Panc1 (cell line): ENCODE measurements at regions of chr7 and their contacts with region 1.

Region 1: DNA sequence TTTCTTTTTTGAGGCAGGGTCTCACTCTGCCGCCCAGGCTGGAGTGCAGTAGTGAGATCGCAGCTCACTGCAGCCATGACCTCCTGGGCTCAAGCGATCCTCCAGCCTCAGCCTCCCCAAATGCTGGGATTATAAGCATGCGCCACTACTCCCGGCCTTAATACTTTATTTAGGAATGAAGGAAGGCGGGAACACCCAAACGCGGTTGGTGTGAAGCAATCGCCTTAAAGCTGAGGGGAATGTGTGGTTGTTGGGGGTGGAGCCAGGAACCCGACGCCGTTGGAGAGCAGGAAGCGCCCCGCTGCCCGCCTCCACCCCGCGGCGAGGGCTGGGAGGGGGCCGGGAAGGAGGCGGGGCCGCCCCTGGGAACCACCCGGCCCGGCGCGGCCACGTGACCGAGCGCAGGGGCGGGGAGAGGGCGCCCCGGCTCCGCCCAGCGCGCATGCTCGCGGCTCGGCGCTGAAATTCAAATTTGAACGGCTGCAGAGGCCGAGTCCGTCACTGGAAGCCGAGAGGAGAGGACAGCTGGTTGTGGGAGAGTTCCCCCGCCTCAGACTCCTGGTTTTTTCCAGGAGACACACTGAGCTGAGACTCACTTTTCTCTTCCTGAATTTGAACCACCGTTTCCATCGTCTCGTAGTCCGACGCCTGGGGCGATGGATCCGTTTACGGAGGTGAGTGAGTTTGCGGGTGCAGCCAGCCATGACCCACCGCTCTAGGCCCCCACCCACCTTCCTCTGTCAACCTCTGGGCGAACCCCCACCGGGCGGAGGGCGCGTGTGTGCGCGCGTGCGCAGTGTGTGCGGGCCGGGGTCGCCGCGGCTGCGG is at the start of gene ANLN:
- DNase-seq: peak; percentile 91
- ATAC-seq: peak; percentile 86
- H3K4me3 ChIP-seq: peak within 1 kb of the TSS; percentile 87 to 89
- H3K27ac ChIP-seq: peak within 1 kb of the TSS; percentile 100
- H3K4me1 ChIP-seq: peaks cover 46% of the 10 kb centered on the region
- H3K27me3 ChIP-seq: no peaks in the 10 kb centered on the region
- CTCF ChIP-seq: no peak
- total RNA-seq, gene ANLN: 238 TPM

Region 2: GRCh38 chr7:36182854-36183604 is 206.6 kb before region 1 on chr7:
- CTCF ChIA-PET with region 1: no interaction called
- POLR2A ChIA-PET with region 1: interaction called, 11 read pairs
- in situ Hi-C with region 1: no loop called
- intact Hi-C with region 1: no loop called
- DNase-seq: no peak
- ATAC-seq: peak; percentile 47
- H3K4me3 ChIP-seq: no peak overlapping the region
- H3K27ac ChIP-seq: peak overlapping the region; percentile 60
- H3K4me1 ChIP-seq: peaks cover 60% of the 10 kb centered on the region
- H3K27me3 ChIP-seq: no peaks in the 10 kb centered on the region
- CTCF ChIP-seq: no peak

Region 3: DNA sequence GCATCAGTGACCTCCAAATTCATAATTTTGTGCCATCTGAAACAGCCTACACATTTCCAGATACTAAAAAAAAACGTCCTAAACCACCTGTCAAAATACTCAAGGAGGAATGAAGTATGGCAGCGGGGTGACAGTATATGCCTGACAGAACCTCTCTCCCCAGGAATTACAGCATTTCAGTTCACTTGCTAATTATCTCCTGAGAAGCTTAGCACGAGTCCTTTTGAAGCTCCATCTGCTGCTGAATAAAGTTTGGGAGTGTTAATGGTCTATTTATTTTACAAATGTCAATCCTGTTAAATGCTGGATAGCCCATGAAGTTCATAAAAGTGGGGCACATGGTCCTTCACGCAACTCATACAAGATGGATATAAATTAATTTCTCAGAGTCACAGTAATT is 29.3 kb before region 1 on chr7:
- CTCF ChIA-PET with region 1: no interaction called
- POLR2A ChIA-PET with region 1: interaction called, 13 read pairs
- in situ Hi-C with region 1: no loop called
- intact Hi-C with region 1: no loop called
- DNase-seq: no peak
- ATAC-seq: no peak
- H3K4me3 ChIP-seq: no peak overlapping the region
- H3K27ac ChIP-seq: peak overlapping the region; percentile 32; the same call in 1 of the 2 replicates
- H3K4me1 ChIP-seq: peaks cover 23% of the 10 kb centered on the region
- H3K27me3 ChIP-seq: no peaks in the 10 kb centered on the region
- CTCF ChIP-seq: no peak

Region 4: DNA sequence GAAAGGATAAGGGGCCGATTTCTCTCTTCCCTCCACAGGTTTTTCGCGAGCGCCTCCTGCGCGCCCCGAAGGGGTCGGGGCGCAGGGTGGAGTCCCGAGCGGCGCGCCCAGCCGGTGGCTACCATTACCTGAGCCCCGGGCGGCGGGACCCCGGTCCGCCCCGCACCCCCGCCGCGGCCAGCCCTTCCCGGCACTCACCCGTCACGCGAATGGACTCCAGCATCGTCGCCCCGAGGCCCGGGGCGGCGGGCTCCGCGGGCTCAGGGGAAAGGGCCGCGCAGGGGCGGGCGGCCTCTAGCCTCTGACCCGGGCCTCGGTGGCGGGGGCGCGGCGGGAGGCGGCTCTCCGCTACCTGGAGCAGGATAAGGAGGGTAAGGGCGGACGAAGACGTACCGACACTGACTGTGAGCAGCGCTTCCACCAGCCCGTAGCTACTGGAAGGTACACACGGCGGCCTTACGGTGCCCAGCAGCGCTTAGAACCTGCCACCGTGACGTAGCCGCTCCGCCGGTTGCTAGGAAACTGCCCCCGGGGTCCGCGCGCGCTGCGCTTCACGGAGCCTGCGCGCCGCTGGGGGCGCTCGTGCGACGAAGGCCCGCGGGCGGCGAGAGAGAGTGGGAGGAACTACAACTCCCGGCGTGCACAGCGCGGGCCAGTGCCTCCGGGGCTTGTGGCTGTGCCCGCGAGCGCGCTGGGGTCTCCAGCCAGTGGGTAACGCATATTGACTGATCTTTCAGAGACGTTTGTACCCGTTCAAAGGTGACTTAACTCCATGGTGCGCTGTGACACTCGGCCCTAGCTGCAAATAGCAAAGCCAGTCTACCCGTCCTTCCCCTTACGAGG is 22.6 kb before region 1 on chr7:
- CTCF ChIA-PET with region 1: interaction called, 7 read pairs
- POLR2A ChIA-PET with region 1: interaction called, 11 read pairs
- in situ Hi-C with region 1: no loop called
- intact Hi-C with region 1: no loop called
- DNase-seq: peak; percentile 81
- ATAC-seq: peak; percentile 98
- H3K4me3 ChIP-seq: peak overlapping the region; percentile 58 to 74
- H3K27ac ChIP-seq: peak overlapping the region; percentile 92
- H3K4me1 ChIP-seq: peaks cover 30% of the 10 kb centered on the region
- H3K27me3 ChIP-seq: no peaks in the 10 kb centered on the region
- CTCF ChIP-seq: peak; percentile 99

Region 5: DNA sequence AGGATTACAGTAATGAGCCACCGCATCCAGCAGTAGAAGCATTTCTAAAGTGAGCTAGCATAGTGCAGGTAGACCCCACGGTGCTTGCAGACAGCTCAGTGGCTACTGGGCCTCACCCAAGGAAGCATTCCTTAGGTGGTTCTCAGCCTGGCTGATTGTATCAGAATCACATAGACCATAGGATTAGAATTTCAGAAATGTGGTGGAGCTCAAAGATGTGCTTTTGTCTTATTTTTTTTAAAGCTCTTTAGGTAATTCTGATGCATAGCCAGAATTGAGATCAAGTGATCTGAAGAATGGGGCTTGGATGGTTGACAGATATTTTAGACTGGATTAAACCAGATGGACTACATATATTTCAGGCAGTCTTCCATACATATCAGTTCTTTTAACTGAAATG is 11.0 kb after region 1 on chr7:
- CTCF ChIA-PET with region 1: no interaction called
- POLR2A ChIA-PET with region 1: interaction called, 10 read pairs
- in situ Hi-C with region 1: no loop called
- intact Hi-C with region 1: no loop called
- DNase-seq: no peak
- ATAC-seq: 0 out of 2 replicates have a peak, but pooled peaks have one; percentile 32
- H3K4me3 ChIP-seq: no peak overlapping the region
- H3K27ac ChIP-seq: peak overlapping the region; percentile 23
- H3K4me1 ChIP-seq: peaks cover 46% of the 10 kb centered on the region
- H3K27me3 ChIP-seq: no peaks in the 10 kb centered on the region
- CTCF ChIP-seq: no peak

Region 6: DNA sequence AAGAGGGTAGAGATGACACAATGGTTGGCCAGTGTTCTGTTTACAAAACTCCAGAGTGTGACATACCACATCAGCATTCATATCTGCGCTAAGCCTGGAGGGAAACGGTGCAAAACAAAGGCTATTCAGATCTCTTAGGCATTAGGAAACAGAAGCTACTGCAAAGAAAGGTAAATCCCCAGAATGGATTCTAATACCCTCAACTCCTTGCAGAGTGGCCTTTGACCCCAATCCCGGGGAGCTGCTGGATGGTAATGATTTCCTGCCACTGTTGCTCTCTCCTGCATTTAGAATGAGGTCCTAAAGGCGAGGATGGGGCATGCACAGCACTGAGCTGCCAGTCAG is 269.6 kb after region 1 on chr7:
- CTCF ChIA-PET with region 1: no interaction called
- POLR2A ChIA-PET with region 1: interaction called, 10 read pairs
- in situ Hi-C with region 1: no loop called
- intact Hi-C with region 1: no loop called
- DNase-seq: peak; percentile 98
- ATAC-seq: peak; percentile 95
- H3K4me3 ChIP-seq: peak overlapping the region; percentile 2 to 28; a peak in 3 of 4 replicates
- H3K27ac ChIP-seq: peak overlapping the region; percentile 99
- H3K4me1 ChIP-seq: peaks cover 34% of the 10 kb centered on the region
- H3K27me3 ChIP-seq: no peaks in the 10 kb centered on the region
- CTCF ChIP-seq: no peak